PC-9 (cell line): ENCODE measurements at regions of chr14 and their contacts with region 1.

Region 1: GRCh38 chr14:103528587-103529382 is at the start of gene TRMT61A:
- DNase-seq: peak; percentile 89 to 93
- H3K4me3 ChIP-seq: peak within 1 kb of the TSS; percentile 79
- H3K27ac ChIP-seq: peak within 1 kb of the TSS; percentile 23
- H3K4me1 ChIP-seq: peaks cover 23% of the 10 kb centered on the region
- H3K27me3 ChIP-seq: no peaks in the 10 kb centered on the region
- CTCF ChIP-seq: no peak
- total RNA-seq, gene TRMT61A: 22.5 and 25.9 TPM in 2 replicates

Region 2: GRCh38 chr14:103002578-103003350 is 526.0 kb before region 1 on chr14:
- CTCF ChIA-PET with region 1: no interaction called
- POLR2A ChIA-PET with region 1: no interaction called
- intact Hi-C with region 1: no loop called
- DNase-seq: no peak
- H3K4me3 ChIP-seq: no peak overlapping the region
- H3K27ac ChIP-seq: no peak overlapping the region
- H3K4me1 ChIP-seq: no peaks in the 10 kb centered on the region
- H3K27me3 ChIP-seq: no peaks in the 10 kb centered on the region
- CTCF ChIP-seq: peak; percentile 30; the same call in 1 of the 2 replicates

Region 3: GRCh38 chr14:103401223-103402214 is 127.3 kb before region 1 on chr14:
- CTCF ChIA-PET with region 1: no interaction called
- POLR2A ChIA-PET with region 1: no interaction called
- intact Hi-C with region 1: no loop called
- DNase-seq: peak in 1 of 2 experiments; percentile 22
- H3K4me3 ChIP-seq: no peak overlapping the region
- H3K27ac ChIP-seq: peak overlapping the region; percentile 63
- H3K4me1 ChIP-seq: peaks cover 59% of the 10 kb centered on the region
- H3K27me3 ChIP-seq: no peaks in the 10 kb centered on the region
- CTCF ChIP-seq: no peak

Region 4: GRCh38 chr14:103749860-103750259 is 221.1 kb after region 1 on chr14:
- CTCF ChIA-PET with region 1: no interaction called
- POLR2A ChIA-PET with region 1: interaction called, 10 read pairs
- intact Hi-C with region 1: no loop called
- DNase-seq: no peak
- H3K4me3 ChIP-seq: no peak overlapping the region
- H3K27ac ChIP-seq: no peak overlapping the region
- H3K4me1 ChIP-seq: peaks cover 10% of the 10 kb centered on the region
- H3K27me3 ChIP-seq: no peaks in the 10 kb centered on the region
- CTCF ChIP-seq: peak; percentile 47